ENCODE measurements at regions of chr16 and their contacts with region 1.

Region 1: DNA sequence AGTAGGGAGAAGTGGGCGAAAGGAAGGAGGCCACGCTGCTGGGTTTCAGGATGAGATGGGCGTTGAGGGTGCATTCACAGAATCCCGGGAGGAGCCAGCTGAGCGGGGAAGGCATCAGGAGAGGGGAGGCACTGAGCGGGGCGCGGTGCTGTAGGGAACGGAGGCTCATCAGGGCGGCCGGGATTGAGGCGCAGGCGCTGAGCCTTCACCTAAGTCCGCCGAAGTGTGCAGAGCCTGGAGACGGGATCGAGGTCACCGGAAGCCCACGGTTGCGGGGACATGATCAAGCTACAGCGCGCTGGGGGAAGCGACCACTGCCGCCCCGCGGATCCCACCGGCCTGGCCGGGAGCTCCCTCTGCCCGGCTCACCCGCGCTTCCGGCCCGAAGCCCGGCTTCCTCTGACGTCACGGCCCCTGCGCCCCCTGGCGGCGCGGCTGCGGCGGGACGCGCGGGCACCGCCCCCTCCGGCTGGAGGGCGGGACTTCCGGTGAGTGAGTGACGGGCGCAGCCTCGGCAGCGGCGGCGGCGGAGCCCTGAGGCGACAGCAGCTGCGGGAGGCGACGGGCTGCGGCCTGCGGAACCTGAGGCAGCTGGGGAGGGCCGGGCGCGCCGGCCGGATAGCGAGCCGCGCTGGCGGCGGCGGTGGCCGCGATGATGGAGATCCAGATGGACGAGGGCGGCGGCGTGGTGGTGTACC is at the start of gene MAPK8IP3:
- DNase-seq: peak; percentile 100
- ATAC-seq: peak; percentile 81
- H3K4me3 Mint-ChIP-seq: peak within 1 kb of the TSS; percentile 99
- H3K27ac Mint-ChIP-seq: peak within 1 kb of the TSS; percentile 98
- H3K4me1 Mint-ChIP-seq: peaks cover 38% of the 10 kb centered on the region
- H3K27me3 Mint-ChIP-seq: no peaks in the 10 kb centered on the region
- CTCF ChIP-seq: no peak
- total RNA-seq, gene MAPK8IP3: 157 and 201 TPM in 2 replicates

Region 2: GRCh38 chr16:938136-938795 is 767.6 kb before region 1 on chr16:
- CTCF ChIA-PET with region 1: no interaction called
- POLR2A ChIA-PET with region 1: no interaction called
- intact Hi-C with region 1: no loop called
- DNase-seq: no peak
- ATAC-seq: no peak
- H3K4me3 Mint-ChIP-seq: no peak overlapping the region
- H3K27ac Mint-ChIP-seq: no peak overlapping the region
- H3K4me1 Mint-ChIP-seq: no peaks in the 10 kb centered on the region
- H3K27me3 Mint-ChIP-seq: no peaks in the 10 kb centered on the region
- CTCF ChIP-seq: no peak

Region 3: GRCh38 chr16:1351582-1352362 is 354.1 kb before region 1 on chr16 and contains the starts of genes GNPTG and TSR3:
- CTCF ChIA-PET with region 1: no interaction called
- POLR2A ChIA-PET with region 1: no interaction called
- intact Hi-C with region 1: loop called (anchors 1 kb)
- DNase-seq: peak; percentile 92
- ATAC-seq: peak; percentile 93
- H3K4me3 Mint-ChIP-seq: peak within 1 kb of the TSS; percentile 85
- H3K27ac Mint-ChIP-seq: peak within 1 kb of the TSS; percentile 77
- H3K4me1 Mint-ChIP-seq: peaks cover 30% of the 10 kb centered on the region
- H3K27me3 Mint-ChIP-seq: no peaks in the 10 kb centered on the region
- CTCF ChIP-seq: no peak
- total RNA-seq, gene GNPTG: 36.3 and 40.2 TPM in 2 replicates
- total RNA-seq, gene TSR3: 45.3 and 49.0 TPM in 2 replicates

Region 4: DNA sequence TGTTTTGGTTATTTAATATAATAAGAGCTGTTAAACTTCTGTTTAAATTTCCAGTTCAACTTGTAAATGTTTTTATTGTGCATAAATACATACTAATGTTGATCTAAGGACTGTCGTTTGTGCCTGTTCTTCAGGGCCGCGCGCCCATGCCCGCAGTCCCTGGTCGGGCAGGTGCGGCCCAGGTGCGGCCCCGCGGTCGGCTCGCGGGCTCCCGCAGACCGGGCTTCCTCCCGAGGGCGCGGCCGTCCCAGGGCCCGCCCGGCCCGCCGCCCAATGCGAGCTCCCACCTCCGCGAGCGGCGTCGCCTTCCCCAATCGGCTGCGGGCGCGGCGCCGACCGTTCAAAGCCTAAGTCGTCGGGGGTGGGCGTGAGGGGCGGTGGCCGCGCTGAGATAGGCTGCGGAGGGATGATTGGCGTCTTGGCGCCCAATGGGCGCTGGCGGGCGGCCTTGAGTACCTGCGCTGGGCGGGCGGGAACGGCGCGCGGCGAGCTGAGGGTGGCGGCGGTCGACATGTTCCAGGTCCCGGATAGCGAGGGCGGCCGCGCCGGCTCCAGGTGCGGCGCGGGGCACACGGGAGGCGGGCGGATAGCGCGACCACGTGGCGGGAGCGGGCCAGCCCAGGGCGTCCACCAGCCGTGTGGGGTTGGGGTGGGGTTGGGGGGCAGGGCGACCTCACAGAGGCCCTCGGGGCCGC is 27.9 kb before region 1 on chr16 and contains the start of gene JPT2:
- CTCF ChIA-PET with region 1: interaction called, 16 read pairs
- POLR2A ChIA-PET with region 1: interaction called, 49 read pairs
- intact Hi-C with region 1: loop called (anchors 1 kb)
- DNase-seq: peak; percentile 92
- ATAC-seq: peak; percentile 96
- H3K4me3 Mint-ChIP-seq: peak within 1 kb of the TSS; percentile 89
- H3K27ac Mint-ChIP-seq: peak within 1 kb of the TSS; percentile 76
- H3K4me1 Mint-ChIP-seq: peaks cover 29% of the 10 kb centered on the region
- H3K27me3 Mint-ChIP-seq: no peaks in the 10 kb centered on the region
- CTCF ChIP-seq: no peak
- total RNA-seq, gene JPT2: 43.4 and 48.7 TPM in 2 replicates

Region 5: GRCh38 chr16:1723450-1724147 is 17.8 kb after region 1 on chr16:
- CTCF ChIA-PET with region 1: interaction called, 16 read pairs
- POLR2A ChIA-PET with region 1: interaction called, 4 read pairs
- intact Hi-C with region 1: no loop called
- DNase-seq: no peak
- ATAC-seq: peak; percentile 59
- H3K4me3 Mint-ChIP-seq: peak overlapping the region; percentile 60
- H3K27ac Mint-ChIP-seq: peak overlapping the region; percentile 76
- H3K4me1 Mint-ChIP-seq: peaks cover 72% of the 10 kb centered on the region
- H3K27me3 Mint-ChIP-seq: no peaks in the 10 kb centered on the region
- CTCF ChIP-seq: peak; percentile 95

Region 6: GRCh38 chr16:1772736-1773584 is 67.1 kb after region 1 on chr16 and contains the starts of genes EME2 and MRPS34:
- CTCF ChIA-PET with region 1: interaction called, 8 read pairs
- POLR2A ChIA-PET with region 1: interaction called, 37 read pairs
- intact Hi-C with region 1: loop called (anchors 2 kb)
- DNase-seq: peak; percentile 81
- ATAC-seq: peak; percentile 58
- H3K4me3 Mint-ChIP-seq: peak within 1 kb of the TSS; percentile 87
- H3K27ac Mint-ChIP-seq: peak within 1 kb of the TSS; percentile 89
- H3K4me1 Mint-ChIP-seq: peaks cover 24% of the 10 kb centered on the region
- H3K27me3 Mint-ChIP-seq: no peaks in the 10 kb centered on the region
- CTCF ChIP-seq: peak; percentile 50
- total RNA-seq, gene EME2: 37.1 and 49.9 TPM in 2 replicates
- total RNA-seq, gene MRPS34: 60.9 and 65.1 TPM in 2 replicates

Region 7: DNA sequence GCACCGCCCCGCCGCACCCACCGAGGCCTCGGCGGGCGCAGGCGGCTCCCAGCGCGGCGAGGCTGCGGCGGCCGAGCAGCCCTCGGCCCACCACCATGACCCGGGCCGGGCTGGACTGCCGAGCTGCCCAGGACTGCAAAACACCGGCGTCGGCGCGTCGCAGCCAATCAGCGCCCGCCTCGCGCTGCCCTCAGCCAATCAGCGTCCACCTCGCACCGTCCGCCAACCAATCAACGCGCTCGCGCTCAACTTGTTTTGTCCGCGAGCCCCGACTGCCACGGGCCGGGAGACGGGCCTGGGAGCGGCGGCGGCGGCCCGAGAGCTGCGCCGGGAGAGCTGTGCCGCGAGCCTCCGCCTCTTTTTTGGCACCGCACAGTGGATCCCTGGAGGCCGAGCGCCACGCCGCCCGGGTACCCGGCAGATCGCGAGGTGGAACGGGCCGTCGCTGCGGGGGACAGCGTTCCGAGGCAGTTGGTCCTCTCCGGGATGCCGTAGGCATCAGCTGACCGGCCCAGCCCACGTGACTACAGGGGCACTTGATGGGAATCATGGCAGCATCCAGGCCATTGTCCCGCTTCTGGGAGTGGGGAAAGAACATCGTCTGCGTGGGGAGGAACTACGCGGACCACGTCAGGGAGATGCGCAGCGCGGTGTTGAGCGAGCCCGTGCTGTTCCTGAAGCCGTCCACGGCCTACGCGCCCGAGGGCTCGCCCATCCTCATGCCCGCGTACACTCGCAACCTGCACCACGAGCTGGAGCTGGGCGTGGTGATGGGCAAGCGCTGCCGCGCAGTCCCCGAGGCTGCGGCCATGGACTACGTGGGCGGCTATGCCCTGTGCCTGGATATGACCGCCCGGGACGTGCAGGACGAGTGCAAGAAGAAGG is 121.1 kb after region 1 on chr16 and contains the starts of genes FAHD1 and HAGH:
- CTCF ChIA-PET with region 1: no interaction called
- POLR2A ChIA-PET with region 1: interaction called, 8 read pairs
- intact Hi-C with region 1: loop called (anchors 1 kb)
- DNase-seq: peak; percentile 95
- ATAC-seq: peak; percentile 88
- H3K4me3 Mint-ChIP-seq: peak within 1 kb of the TSS; percentile 94
- H3K27ac Mint-ChIP-seq: peak within 1 kb of the TSS; percentile 91
- H3K4me1 Mint-ChIP-seq: peaks cover 39% of the 10 kb centered on the region
- H3K27me3 Mint-ChIP-seq: no peaks in the 10 kb centered on the region
- CTCF ChIP-seq: no peak
- total RNA-seq, gene FAHD1: 10.2 and 10.4 TPM in 2 replicates
- total RNA-seq, gene HAGH: 19.0 and 19.5 TPM in 2 replicates

Measured in activated B cell treated with CpG ODN at 0.5 μM for 24 hours (primary cell).